B cell (primary cell): ENCODE measurements at regions of chr10 and their contacts with region 1.

Region 1: GRCh38 chr10:123994417-123995081 is 98.8 kb downstream of the CHST15 start:
- DNase-seq: peak; percentile 87
- ATAC-seq: peak; percentile 82
- H3K4me3 ChIP-seq: peak overlapping the region; percentile 2 to 65 (median 30)
- H3K4me3 Mint-ChIP-seq: peak overlapping the region; percentile 84
- H3K27ac ChIP-seq: no peak overlapping the region
- H3K27ac Mint-ChIP-seq: peak overlapping the region; percentile 55
- H3K4me1 ChIP-seq: peaks cover 29 to 36% of the 10 kb centered on the region in 2 donors
- H3K4me1 Mint-ChIP-seq: peaks cover 40% of the 10 kb centered on the region
- H3K27me3 ChIP-seq: peaks cover 0 to 34% (median 20%) of the 10 kb centered on the region in 4 experiments
- H3K27me3 Mint-ChIP-seq: peaks cover 38% of the 10 kb centered on the region
- CTCF ChIP-seq: peak; percentile 99

Region 2: DNA sequence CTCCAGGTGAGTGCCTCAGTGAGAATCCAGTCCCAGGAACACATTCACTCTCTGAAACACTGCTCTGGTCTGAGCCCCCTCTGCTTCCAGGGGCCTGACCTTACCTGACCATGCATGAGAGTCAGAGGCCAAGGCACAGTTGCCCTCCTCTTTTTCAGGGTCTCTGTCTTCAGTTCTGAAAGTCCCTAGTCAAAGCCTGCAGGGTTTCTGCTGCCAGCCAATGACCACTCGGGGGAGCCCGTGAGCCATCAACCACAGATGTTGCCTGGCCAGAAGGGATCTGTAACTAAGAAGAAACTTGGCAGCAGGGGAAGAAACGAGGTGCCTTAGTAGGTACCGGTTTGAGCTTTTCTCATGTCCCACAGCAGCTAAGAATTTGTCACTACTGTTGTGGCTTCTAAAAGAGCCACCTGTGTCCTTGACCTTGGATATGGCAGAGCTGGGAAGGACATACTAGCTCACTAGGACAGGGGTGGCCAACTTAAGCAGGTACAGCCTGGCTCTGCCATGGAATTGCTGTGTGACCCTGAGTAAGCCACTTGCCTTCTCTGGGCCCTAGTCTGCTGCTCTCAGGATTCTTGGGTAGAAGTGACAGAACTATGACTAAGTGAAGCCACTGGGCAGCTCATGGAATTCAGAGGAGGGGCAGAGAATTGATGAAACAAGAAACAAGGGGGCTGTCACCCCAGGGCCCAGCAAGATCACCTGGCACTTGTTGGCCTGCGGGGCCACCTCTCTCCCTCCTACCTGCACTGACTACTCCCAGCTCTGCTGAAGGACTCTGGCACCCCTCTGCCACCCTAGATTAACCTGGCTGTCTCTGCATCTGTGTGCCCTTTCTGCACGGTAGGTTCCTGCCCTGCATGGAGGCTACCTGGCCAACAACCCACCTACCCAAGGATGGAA is 412.2 kb before region 1 on chr10:
- CTCF ChIA-PET with region 1: no interaction called
- POLR2A ChIA-PET with region 1: no interaction called
- intact Hi-C with region 1: loop called (anchors 1 kb)
- DNase-seq: peak; percentile 72
- ATAC-seq: peak; percentile 68
- H3K4me3 ChIP-seq: no peak overlapping the region
- H3K4me3 Mint-ChIP-seq: no peak overlapping the region
- H3K27ac ChIP-seq: no peak overlapping the region
- H3K27ac Mint-ChIP-seq: no peak overlapping the region
- H3K4me1 ChIP-seq: no peaks in the 10 kb centered on the region
- H3K4me1 Mint-ChIP-seq: no peaks in the 10 kb centered on the region
- H3K27me3 ChIP-seq: peaks cover 0 to 34% (median 14%) of the 10 kb centered on the region in 4 experiments
- H3K27me3 Mint-ChIP-seq: peaks cover 60% of the 10 kb centered on the region
- CTCF ChIP-seq: peak; percentile 84

Region 3: GRCh38 chr10:123848564-123849457 is 145.7 kb before region 1 on chr10:
- CTCF ChIA-PET with region 1: no interaction called
- POLR2A ChIA-PET with region 1: no interaction called
- intact Hi-C with region 1: no loop called
- DNase-seq: no peak
- ATAC-seq: no peak
- H3K4me3 ChIP-seq: no peak overlapping the region
- H3K4me3 Mint-ChIP-seq: no peak overlapping the region
- H3K27ac ChIP-seq: no peak overlapping the region
- H3K27ac Mint-ChIP-seq: no peak overlapping the region
- H3K4me1 ChIP-seq: no peaks in the 10 kb centered on the region
- H3K4me1 Mint-ChIP-seq: no peaks in the 10 kb centered on the region
- H3K27me3 ChIP-seq: peaks cover 0 to 7% (median 3%) of the 10 kb centered on the region in 4 experiments
- H3K27me3 Mint-ChIP-seq: peaks cover 22% of the 10 kb centered on the region
- CTCF ChIP-seq: no peak

Region 4: DNA sequence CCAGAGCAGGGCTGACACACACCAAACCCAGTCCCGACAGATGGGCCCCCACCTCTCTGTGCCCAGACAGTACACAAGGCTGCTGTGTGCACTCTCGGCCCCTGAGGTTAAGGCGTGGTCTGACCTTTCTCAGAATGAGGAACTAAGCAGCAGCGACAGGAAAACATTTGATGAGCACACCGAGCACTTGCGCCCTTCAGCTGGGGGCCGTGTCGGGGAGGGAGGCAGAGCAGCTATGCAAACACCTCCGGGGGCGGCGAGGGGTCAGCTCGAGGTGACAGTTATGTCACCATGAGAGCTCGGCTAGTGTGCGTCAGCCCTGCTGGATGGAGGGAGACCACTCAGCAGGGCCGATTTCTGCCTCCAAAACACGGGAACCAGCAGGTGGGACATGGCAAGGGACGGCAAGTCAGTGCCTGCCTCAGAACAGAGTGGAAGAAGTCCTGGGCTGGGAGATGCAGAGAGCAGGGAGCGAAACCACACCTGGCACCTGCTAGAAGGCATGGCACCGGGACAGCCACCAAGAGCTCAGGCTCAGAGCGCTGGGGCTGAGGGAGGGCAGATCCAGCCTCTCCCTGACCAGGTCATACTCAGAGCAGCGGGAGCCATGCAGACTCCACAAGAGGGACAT is 41.5 kb after region 1 on chr10:
- CTCF ChIA-PET with region 1: interaction called, 12 read pairs
- POLR2A ChIA-PET with region 1: interaction called, 11 read pairs
- intact Hi-C with region 1: loop called (anchors 2 kb)
- DNase-seq: peak; percentile 90
- ATAC-seq: peak; percentile 91
- H3K4me3 ChIP-seq: peak overlapping the region in 4 of 5 experiments; percentile 30 to 47 (median 36)
- H3K4me3 Mint-ChIP-seq: peak overlapping the region; percentile 85
- H3K27ac ChIP-seq: peak overlapping the region; percentile 79 to 85
- H3K27ac Mint-ChIP-seq: peak overlapping the region; percentile 98
- H3K4me1 ChIP-seq: peaks cover 19 to 41% of the 10 kb centered on the region in 2 donors
- H3K4me1 Mint-ChIP-seq: peaks cover 26% of the 10 kb centered on the region
- H3K27me3 ChIP-seq: no peaks in the 10 kb centered on the region
- H3K27me3 Mint-ChIP-seq: no peaks in the 10 kb centered on the region
- CTCF ChIP-seq: no peak

Region 5: GRCh38 chr10:124125447-124126116 is 131.0 kb after region 1 on chr10:
- CTCF ChIA-PET with region 1: interaction called, 14 read pairs
- POLR2A ChIA-PET with region 1: no interaction called
- intact Hi-C with region 1: no loop called
- DNase-seq: peak; percentile 62
- ATAC-seq: no peak
- H3K4me3 ChIP-seq: no peak overlapping the region
- H3K4me3 Mint-ChIP-seq: no peak overlapping the region
- H3K27ac ChIP-seq: no peak overlapping the region
- H3K27ac Mint-ChIP-seq: no peak overlapping the region
- H3K4me1 ChIP-seq: peaks cover 32 to 61% of the 10 kb centered on the region in 2 donors
- H3K4me1 Mint-ChIP-seq: peaks cover 7% of the 10 kb centered on the region
- H3K27me3 ChIP-seq: no peaks in the 10 kb centered on the region
- H3K27me3 Mint-ChIP-seq: no peaks in the 10 kb centered on the region
- CTCF ChIP-seq: peak; percentile 70

Region 6: GRCh38 chr10:124231168-124232155 is 236.9 kb after region 1 on chr10:
- CTCF ChIA-PET with region 1: interaction called, 11 read pairs
- POLR2A ChIA-PET with region 1: no interaction called
- intact Hi-C with region 1: no loop called
- DNase-seq: peak; percentile 62
- ATAC-seq: peak; percentile 55
- H3K4me3 ChIP-seq: no peak overlapping the region
- H3K4me3 Mint-ChIP-seq: peak overlapping the region; percentile 19
- H3K27ac ChIP-seq: no peak overlapping the region
- H3K27ac Mint-ChIP-seq: peak overlapping the region; percentile 88
- H3K4me1 ChIP-seq: no peaks in the 10 kb centered on the region
- H3K4me1 Mint-ChIP-seq: peaks cover 3% of the 10 kb centered on the region
- H3K27me3 ChIP-seq: no peaks in the 10 kb centered on the region
- H3K27me3 Mint-ChIP-seq: no peaks in the 10 kb centered on the region
- CTCF ChIP-seq: no peak

Region 7: GRCh38 chr10:124388823-124389612 is 394.5 kb after region 1 on chr10:
- CTCF ChIA-PET with region 1: interaction called, 365 read pairs
- POLR2A ChIA-PET with region 1: interaction called, 18 read pairs
- intact Hi-C with region 1: no loop called
- DNase-seq: peak; percentile 94
- ATAC-seq: peak; percentile 99
- H3K4me3 ChIP-seq: peak overlapping the region in 4 of 5 experiments; percentile 38 to 75 (median 57)
- H3K4me3 Mint-ChIP-seq: peak overlapping the region; percentile 61
- H3K27ac ChIP-seq: no peak overlapping the region
- H3K27ac Mint-ChIP-seq: no peak overlapping the region
- H3K4me1 ChIP-seq: peaks cover 4 to 13% of the 10 kb centered on the region in 2 donors
- H3K4me1 Mint-ChIP-seq: peaks cover 5% of the 10 kb centered on the region
- H3K27me3 ChIP-seq: peaks cover 0 to 3% (median under 1%) of the 10 kb centered on the region in 4 experiments
- H3K27me3 Mint-ChIP-seq: peaks cover 6% of the 10 kb centered on the region
- CTCF ChIP-seq: peak; percentile 97